Ovary (tissue), 10 donors: ENCODE measurements at regions of chr4 and their contacts with region 1.

Region 1: DNA sequence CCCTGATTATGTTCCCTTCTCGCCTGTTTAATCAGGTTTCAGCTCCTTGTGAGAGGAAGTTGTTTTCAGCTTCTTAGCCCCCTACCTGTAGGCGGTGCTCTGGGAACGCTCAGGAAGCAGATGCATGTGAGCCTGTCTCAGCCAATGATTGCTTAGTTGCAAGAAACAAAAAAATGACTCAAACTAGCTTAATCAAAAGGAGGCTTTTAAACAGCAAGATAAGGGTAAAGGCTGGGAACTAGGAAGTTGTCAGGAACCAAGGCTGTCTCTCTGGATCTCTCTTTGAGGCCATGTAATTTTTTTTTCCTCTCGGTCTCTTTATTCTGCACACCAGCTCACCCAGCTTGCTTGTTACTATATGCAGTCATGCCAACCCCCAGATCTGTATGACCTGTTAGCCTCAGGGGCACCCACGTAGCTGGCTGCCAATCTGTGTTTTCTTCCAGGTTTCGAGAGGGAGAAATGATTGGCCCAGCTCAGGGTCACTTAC is 109.1 kb downstream of the PTTG2 start:
- DNase-seq: peak; percentile 73 to 81 (median 78)
- H3K4me3 ChIP-seq: no peak overlapping the region
- H3K27ac ChIP-seq: peak overlapping the region; percentile 48 to 74
- H3K4me1 ChIP-seq: peaks cover 7% of the 10 kb centered on the region
- H3K27me3 ChIP-seq: no peaks in the 10 kb centered on the region
- CTCF ChIP-seq: peak; percentile 52 to 89 (median 75)
- EP300 ChIP-seq: no peak
- POLR2A ChIP-seq: no peak

Region 2: DNA sequence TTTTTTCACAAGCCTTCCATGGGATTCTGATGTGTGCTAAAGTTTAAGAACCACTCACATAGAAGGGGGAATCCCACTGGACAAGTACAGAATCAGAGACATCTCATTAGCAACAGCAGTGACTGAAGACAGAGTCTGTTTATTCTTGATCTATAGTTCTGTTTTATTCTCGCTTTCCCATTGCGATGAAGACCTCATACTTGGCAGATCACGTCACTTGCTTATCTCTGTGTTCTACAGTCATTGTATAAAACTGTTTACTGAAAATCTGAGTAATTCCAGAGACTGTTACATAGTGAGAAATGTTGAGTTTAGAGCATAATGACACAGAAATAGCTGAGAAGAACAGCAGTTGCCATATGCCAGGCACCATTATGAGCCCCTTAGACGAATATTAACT is 76.4 kb after region 1 on chr4:
- intact Hi-C with region 1: no loop called
- DNase-seq: no peak
- H3K4me3 ChIP-seq: no peak overlapping the region
- H3K27ac ChIP-seq: no peak overlapping the region
- H3K4me1 ChIP-seq: peaks cover 2% of the 10 kb centered on the region
- H3K27me3 ChIP-seq: no peaks in the 10 kb centered on the region
- CTCF ChIP-seq: no peak
- EP300 ChIP-seq: no peak
- POLR2A ChIP-seq: no peak

Region 3: DNA sequence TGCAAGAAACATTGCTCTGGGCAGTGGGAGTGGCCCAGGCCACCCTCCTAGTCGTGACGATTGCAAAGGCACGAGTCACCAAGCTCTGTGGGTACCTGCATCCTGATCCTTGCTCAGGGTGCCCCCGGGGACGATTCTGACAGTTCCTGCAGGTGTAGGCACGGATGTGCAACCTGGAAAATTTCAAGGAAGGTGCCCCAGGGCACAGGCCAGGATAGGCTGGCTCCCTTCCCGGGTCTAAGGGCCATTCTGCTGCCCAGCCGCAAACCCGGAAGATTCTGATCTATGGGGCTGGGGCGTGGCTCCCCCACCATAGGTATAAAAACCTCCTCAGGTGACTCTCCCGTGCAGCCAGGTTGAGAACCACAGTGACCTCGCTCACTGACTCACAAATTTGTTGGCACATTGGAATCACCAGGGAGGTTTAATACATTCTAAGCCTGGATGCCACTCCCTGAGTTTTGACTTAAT is 119.3 kb after region 1 on chr4:
- intact Hi-C with region 1: no loop called
- DNase-seq: no peak
- H3K4me3 ChIP-seq: no peak overlapping the region
- H3K27ac ChIP-seq: no peak overlapping the region
- H3K4me1 ChIP-seq: peaks cover 5% of the 10 kb centered on the region
- H3K27me3 ChIP-seq: no peaks in the 10 kb centered on the region
- CTCF ChIP-seq: no peak
- EP300 ChIP-seq: no peak
- POLR2A ChIP-seq: no peak

Region 4: GRCh38 chr4:38347251-38347650 is 277.9 kb after region 1 on chr4:
- intact Hi-C with region 1: no loop called
- DNase-seq: no peak
- H3K4me3 ChIP-seq: no peak overlapping the region
- H3K27ac ChIP-seq: no peak overlapping the region
- H3K4me1 ChIP-seq: no peaks in the 10 kb centered on the region
- H3K27me3 ChIP-seq: no peaks in the 10 kb centered on the region
- CTCF ChIP-seq: no peak
- EP300 ChIP-seq: no peak
- POLR2A ChIP-seq: no peak

Region 5: GRCh38 chr4:38675146-38676121 is 606.1 kb after region 1 on chr4:
- intact Hi-C with region 1: loop called (anchors 5 to 10 kb)
- DNase-seq: peak; percentile 72 to 87 (median 74)
- H3K4me3 ChIP-seq: no peak overlapping the region
- H3K27ac ChIP-seq: peak overlapping the region in 1 of 2 donors; percentile 84
- H3K4me1 ChIP-seq: peaks cover 35% of the 10 kb centered on the region
- H3K27me3 ChIP-seq: no peaks in the 10 kb centered on the region
- CTCF ChIP-seq: peak; percentile 80 to 91 (median 89)
- EP300 ChIP-seq: no peak
- POLR2A ChIP-seq: no peak

Region 6: DNA sequence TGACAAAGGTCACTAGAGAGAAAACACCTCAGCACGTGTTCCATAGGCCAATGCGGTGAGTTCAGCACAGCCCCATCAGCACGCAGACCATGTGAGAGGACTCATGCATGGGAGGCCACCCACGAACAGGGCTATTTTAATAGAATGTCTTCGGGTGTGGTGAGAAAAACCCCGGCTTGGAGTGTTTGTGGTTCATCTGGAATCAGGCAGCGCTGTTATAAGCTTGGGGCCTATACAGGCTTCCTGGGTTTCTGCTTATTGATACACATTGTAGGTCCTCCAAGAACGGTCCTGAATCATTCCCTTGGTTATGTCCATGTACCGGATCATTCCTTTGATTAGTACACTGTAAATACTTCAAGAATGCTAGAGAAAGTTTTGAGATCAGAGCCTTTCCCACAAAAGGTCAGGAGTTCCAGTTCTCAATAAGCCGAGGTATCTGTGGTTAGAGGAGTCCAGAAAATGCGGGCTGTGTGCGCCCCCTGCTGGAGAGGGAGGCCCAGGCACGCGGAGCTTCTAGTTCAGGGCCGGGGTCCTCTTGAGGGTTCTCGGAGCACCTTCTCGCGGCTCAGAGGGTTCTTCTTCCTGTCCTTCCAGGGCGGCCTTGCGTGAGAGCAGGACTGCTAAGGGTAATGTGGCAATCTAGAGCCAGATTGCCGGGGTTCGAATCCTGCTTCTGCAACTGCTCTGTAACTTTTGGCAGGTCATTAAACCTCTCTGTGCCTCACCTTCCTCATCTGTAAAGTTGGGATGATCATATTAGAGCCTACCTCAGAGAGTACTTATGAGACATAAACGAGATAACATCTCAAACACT is 661.7 kb after region 1 on chr4:
- intact Hi-C with region 1: loop called in 3 of 4 experiments (anchors 5 to 10 kb)
- DNase-seq: peak; percentile 62 to 89 (median 83)
- H3K4me3 ChIP-seq: no peak overlapping the region
- H3K27ac ChIP-seq: no peak overlapping the region
- H3K4me1 ChIP-seq: peaks cover 1% of the 10 kb centered on the region
- H3K27me3 ChIP-seq: no peaks in the 10 kb centered on the region
- CTCF ChIP-seq: peak; percentile 83 to 89 (median 84)
- EP300 ChIP-seq: no peak
- POLR2A ChIP-seq: no peak